Ascending aorta (tissue), 2 donors: ENCODE measurements at regions of chr3 and their contacts with region 1.

Region 1: DNA sequence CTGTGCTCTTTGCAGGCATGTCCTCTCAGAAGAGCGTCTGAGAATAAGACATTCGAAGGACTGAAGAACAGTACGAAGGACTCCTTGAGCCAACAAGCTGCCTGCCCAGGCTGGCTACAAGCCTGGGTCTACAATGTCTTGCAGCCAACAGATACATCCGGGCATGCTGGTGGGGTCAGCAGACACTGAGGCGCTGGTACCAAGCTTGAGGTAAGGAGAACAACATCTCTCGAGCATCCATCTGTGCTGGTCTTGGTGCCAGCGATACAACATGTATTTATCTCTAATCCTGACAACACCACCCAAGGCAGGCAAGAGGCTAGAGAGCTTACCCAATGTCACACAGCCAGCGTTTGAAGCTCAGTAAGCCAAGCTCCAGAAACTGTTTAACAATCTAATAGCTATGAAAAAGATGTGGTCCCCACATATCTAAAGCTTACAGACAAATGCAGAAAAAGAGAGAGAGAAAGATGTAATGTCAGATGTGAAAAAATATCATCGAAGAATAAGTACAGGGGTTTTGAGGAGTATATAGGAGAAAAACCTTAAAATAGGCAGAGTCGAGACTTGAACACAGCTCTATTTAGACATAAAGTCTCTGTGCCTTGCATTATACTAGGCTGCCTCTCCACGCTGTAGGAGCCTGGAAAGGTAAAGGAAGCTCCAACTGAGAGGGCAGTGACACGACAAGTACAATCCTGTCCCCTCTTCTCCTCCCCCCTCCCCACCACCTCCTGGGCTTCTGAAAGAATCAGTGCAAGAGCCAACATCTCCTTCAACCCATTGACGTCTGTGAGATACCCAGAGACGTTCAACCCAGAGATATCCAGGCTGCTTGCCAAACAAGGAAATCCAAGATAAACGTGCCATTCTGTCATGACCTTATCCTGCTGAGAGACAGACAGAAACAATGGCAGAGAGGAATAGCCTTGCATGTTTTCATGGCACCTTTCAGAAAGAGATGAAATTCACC is 39.4 kb downstream of the WWTR1 start:
- DNase-seq: peak; percentile 25 to 82
- H3K4me3 ChIP-seq: peak overlapping the region in 1 of 2 donors; percentile 4
- H3K27ac ChIP-seq: peak overlapping the region; percentile 85 to 86
- H3K4me1 ChIP-seq: peaks cover 17 to 75% of the 10 kb centered on the region in 2 donors
- H3K27me3 ChIP-seq: no peaks in the 10 kb centered on the region
- CTCF ChIP-seq: no peak

Region 2: GRCh38 chr3:149603126-149604074 is 15.0 kb before region 1 on chr3:
- intact Hi-C with region 1: loop called (anchors 2 kb)
- DNase-seq: no peak
- H3K4me3 ChIP-seq: no peak overlapping the region
- H3K27ac ChIP-seq: peak overlapping the region; percentile 61 to 70
- H3K4me1 ChIP-seq: peaks cover 17 to 77% of the 10 kb centered on the region in 2 donors
- H3K27me3 ChIP-seq: no peaks in the 10 kb centered on the region
- CTCF ChIP-seq: no peak